ENCODE measurements at regions of chr3 and their contacts with region 1.

Region 1: GRCh38 chr3:71305231-71306206 is 278.0 kb downstream of the FOXP1 start:
- DNase-seq: peak; percentile 39
- H3K4me3 ChIP-seq: peak overlapping the region; percentile 31 to 51 (median 40)
- H3K27ac ChIP-seq: peak overlapping the region; percentile 25
- H3K4me1 ChIP-seq: peaks cover 10% of the 10 kb centered on the region
- H3K27me3 ChIP-seq: no peaks in the 10 kb centered on the region
- CTCF ChIP-seq: no peak

Region 2: GRCh38 chr3:70550723-70551319 is 754.7 kb before region 1 on chr3:
- CTCF ChIA-PET with region 1: no interaction called
- dilution Hi-C with region 1: no loop called
- in situ Hi-C with region 1: no loop called
- intact Hi-C with region 1: loop called (anchors 5 kb)
- DNase-seq: peak; percentile 45
- H3K4me3 ChIP-seq: no peak overlapping the region
- H3K27ac ChIP-seq: no peak overlapping the region
- H3K4me1 ChIP-seq: no peaks in the 10 kb centered on the region
- H3K27me3 ChIP-seq: peaks cover 2% of the 10 kb centered on the region
- CTCF ChIP-seq: peak; percentile 57 to 82

Region 3: GRCh38 chr3:71006810-71007785 is 298.4 kb before region 1 on chr3:
- CTCF ChIA-PET with region 1: no interaction called
- dilution Hi-C with region 1: no loop called
- in situ Hi-C with region 1: loop called in 1 of 2 experiments (anchors 10 kb)
- intact Hi-C with region 1: loop called (anchors 1 kb)
- DNase-seq: peak; percentile 93
- H3K4me3 ChIP-seq: no peak overlapping the region
- H3K27ac ChIP-seq: peak overlapping the region; percentile 91
- H3K4me1 ChIP-seq: peaks cover 33% of the 10 kb centered on the region
- H3K27me3 ChIP-seq: no peaks in the 10 kb centered on the region
- CTCF ChIP-seq: peak; percentile 27 to 56

Region 4: GRCh38 chr3:71269906-71270305 is 35.6 kb before region 1 on chr3:
- CTCF ChIA-PET with region 1: no interaction called
- dilution Hi-C with region 1: no loop called
- in situ Hi-C with region 1: no loop called
- intact Hi-C with region 1: no loop called
- DNase-seq: no peak
- H3K4me3 ChIP-seq: no peak overlapping the region
- H3K27ac ChIP-seq: no peak overlapping the region
- H3K4me1 ChIP-seq: no peaks in the 10 kb centered on the region
- H3K27me3 ChIP-seq: no peaks in the 10 kb centered on the region
- CTCF ChIP-seq: no peak

Region 5: DNA sequence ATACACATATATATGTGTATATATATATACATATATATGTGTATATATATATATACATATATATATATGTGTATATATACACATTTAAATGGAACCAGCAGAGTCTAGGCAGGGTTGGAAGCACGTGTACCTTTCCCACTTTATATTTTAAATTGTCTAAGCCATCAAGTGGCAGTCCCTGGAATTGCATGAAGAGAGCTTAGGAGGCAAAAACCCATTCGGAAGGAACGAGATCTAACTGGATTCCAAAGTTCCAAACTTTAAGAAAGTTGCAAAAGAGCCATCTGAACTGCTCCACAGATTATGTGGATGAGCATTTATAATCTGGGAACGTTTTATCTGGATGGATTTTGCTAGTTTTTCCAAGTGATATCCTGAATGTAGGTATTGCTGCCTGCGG is 91.5 kb after region 1 on chr3:
- CTCF ChIA-PET with region 1: no interaction called
- dilution Hi-C with region 1: no loop called
- in situ Hi-C with region 1: no loop called
- intact Hi-C with region 1: loop called (anchors 5 kb)
- DNase-seq: no peak
- H3K4me3 ChIP-seq: no peak overlapping the region
- H3K27ac ChIP-seq: no peak overlapping the region
- H3K4me1 ChIP-seq: peaks cover 13% of the 10 kb centered on the region
- H3K27me3 ChIP-seq: no peaks in the 10 kb centered on the region
- CTCF ChIP-seq: peak; percentile 50 to 57

Region 6: GRCh38 chr3:71681224-71681668 is 375.7 kb after region 1 on chr3:
- CTCF ChIA-PET with region 1: interaction called, 3 read pairs
- dilution Hi-C with region 1: no loop called
- in situ Hi-C with region 1: no loop called
- intact Hi-C with region 1: loop called (anchors 5 kb)
- DNase-seq: peak; percentile 75
- H3K4me3 ChIP-seq: peak overlapping the region; percentile 25 to 32 (median 32)
- H3K27ac ChIP-seq: peak overlapping the region; percentile 29
- H3K4me1 ChIP-seq: peaks cover 43% of the 10 kb centered on the region
- H3K27me3 ChIP-seq: no peaks in the 10 kb centered on the region
- CTCF ChIP-seq: peak; percentile 92